ENCODE measurements at regions of chr10 and their contacts with region 1.

Region 1: DNA sequence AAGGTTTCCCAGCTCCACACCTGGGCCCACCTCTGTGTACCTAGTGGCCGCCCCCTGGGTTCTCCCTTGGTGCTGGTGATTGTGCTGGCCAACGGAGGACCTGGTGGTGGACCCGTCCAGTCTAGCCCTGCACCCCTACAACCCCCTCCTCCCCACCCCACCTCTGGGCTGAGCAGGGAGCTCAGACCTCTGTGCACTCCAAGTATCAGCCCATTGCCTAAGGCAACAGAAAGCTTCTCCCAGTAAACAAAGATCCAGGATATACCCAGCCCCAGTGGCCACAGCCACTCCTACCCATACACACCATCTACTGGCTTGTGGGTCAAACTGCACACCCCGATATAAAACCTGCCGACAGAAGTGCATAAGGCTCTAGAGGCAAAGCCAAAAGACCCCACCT is 105.0 kb upstream of the DIP2C start:
- DNase-seq: peak in 1 of 2 donors; percentile 10
- ATAC-seq: no peak
- H3K4me3 ChIP-seq: no peak overlapping the region
- H3K27ac ChIP-seq: no peak overlapping the region
- H3K4me1 ChIP-seq: peaks cover 0 to 7% of the 10 kb centered on the region in 2 donors
- H3K27me3 ChIP-seq: no peaks in the 10 kb centered on the region
- CTCF ChIP-seq: peak in 1 of 5 experiments; percentile 24
- POLR2A ChIP-seq: no peak

Region 2: DNA sequence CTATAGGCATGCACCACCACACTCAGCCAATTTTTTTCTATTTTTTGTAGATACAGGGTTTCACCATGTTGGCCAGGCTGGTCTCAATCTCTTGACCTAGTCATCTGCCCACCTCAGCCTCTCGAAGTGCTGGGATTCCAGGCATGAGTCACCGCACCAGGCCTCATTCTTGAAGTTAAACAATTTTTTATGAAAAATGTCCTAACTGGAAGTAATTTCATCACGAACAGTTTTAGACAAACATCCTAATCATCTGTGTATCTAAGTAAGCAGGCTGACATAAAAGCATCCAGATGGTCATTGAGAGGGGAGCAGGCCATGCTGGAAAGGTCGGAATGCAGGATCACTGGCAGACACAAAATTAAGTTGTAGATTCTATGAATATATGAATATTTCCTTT is 390.1 kb before region 1 on chr10:
- in situ Hi-C with region 1: no loop called
- intact Hi-C with region 1: no loop called
- DNase-seq: no peak
- ATAC-seq: no peak
- H3K4me3 ChIP-seq: no peak overlapping the region
- H3K27ac ChIP-seq: no peak overlapping the region
- H3K4me1 ChIP-seq: no peaks in the 10 kb centered on the region
- H3K27me3 ChIP-seq: no peaks in the 10 kb centered on the region
- CTCF ChIP-seq: no peak
- POLR2A ChIP-seq: no peak

Region 3: GRCh38 chr10:500876-501275 is 293.6 kb before region 1 on chr10:
- in situ Hi-C with region 1: loop called (anchors 10 to 25 kb)
- intact Hi-C with region 1: no loop called
- DNase-seq: peak in 1 of 2 donors; percentile 5
- ATAC-seq: no peak
- H3K4me3 ChIP-seq: no peak overlapping the region
- H3K27ac ChIP-seq: no peak overlapping the region
- H3K4me1 ChIP-seq: peaks cover 21 to 29% of the 10 kb centered on the region in 2 donors
- H3K27me3 ChIP-seq: no peaks in the 10 kb centered on the region
- CTCF ChIP-seq: no peak
- POLR2A ChIP-seq: no peak

Region 4: DNA sequence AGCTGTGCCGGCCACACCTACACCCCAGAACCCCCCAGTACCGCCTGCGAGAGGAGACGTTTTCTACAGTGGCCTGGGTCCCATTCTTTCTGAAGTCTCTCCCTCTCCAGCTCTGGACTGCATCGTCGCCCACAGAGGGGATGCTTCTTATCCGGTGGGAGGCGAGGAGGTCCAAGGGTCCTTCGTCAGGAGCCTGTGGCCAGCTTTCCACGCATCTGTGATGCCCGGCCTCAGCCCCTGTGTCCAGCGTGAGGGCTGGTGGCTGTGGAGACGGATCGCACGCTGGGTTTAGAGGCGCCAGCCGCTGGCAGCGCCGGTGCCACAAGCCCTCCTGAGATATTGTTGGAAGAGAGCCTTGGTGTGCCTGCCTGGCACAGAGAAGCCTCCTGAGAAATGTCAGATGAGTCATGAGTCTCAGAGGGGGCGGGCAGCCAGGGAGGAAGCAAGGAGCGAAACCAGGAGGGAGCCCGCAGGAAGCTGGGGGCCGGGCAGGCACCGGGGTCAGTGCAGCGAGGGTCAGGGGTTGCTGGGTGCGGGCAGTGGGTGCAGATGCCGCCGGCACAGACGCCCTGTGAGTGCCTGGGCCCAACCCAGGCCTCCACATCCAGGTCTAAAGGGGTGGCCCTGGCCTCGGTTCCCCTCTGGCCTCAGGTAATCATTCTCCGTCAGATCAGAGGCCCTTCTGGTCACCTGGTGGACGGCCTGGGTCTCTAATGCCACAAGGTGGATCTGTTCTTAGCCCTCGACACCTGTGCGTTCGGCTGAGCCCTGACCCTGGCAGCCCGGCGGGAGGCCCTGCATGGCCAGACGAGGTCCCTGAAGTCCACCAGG is 19.0 kb before region 1 on chr10:
- in situ Hi-C with region 1: no loop called
- intact Hi-C with region 1: no loop called
- DNase-seq: peak; percentile 38 to 79
- ATAC-seq: peak; percentile 93 to 98
- H3K4me3 ChIP-seq: peak overlapping the region in 1 of 4 donors; percentile 34
- H3K27ac ChIP-seq: no peak overlapping the region
- H3K4me1 ChIP-seq: no peaks in the 10 kb centered on the region
- H3K27me3 ChIP-seq: no peaks in the 10 kb centered on the region
- CTCF ChIP-seq: no peak
- POLR2A ChIP-seq: no peak